PC-3 (cell line): ENCODE measurements at regions of chr17 and their contacts with region 1.

Region 1: GRCh38 chr17:4789901-4790704 is 1.3 kb downstream of the GLTPD2 start:
- DNase-seq: peak; percentile 78
- ATAC-seq: peak; percentile 81
- H3K4me3 ChIP-seq: peak overlapping the region; percentile 89
- H3K27ac ChIP-seq: peak overlapping the region; percentile 77
- H3K4me1 ChIP-seq: peaks cover 16% of the 10 kb centered on the region
- H3K27me3 ChIP-seq: no peaks in the 10 kb centered on the region
- CTCF ChIP-seq: peak; percentile 59

Region 2: GRCh38 chr17:4703330-4703691 is 86.8 kb before region 1 on chr17:
- CTCF ChIA-PET with region 1: no interaction called
- POLR2A ChIA-PET with region 1: interaction called, 15 read pairs
- intact Hi-C with region 1: no loop called
- DNase-seq: no peak
- ATAC-seq: no peak
- H3K4me3 ChIP-seq: peak overlapping the region; percentile 94
- H3K27ac ChIP-seq: peak overlapping the region; percentile 64
- H3K4me1 ChIP-seq: peaks cover 20% of the 10 kb centered on the region
- H3K27me3 ChIP-seq: no peaks in the 10 kb centered on the region
- CTCF ChIP-seq: no peak

Region 3: DNA sequence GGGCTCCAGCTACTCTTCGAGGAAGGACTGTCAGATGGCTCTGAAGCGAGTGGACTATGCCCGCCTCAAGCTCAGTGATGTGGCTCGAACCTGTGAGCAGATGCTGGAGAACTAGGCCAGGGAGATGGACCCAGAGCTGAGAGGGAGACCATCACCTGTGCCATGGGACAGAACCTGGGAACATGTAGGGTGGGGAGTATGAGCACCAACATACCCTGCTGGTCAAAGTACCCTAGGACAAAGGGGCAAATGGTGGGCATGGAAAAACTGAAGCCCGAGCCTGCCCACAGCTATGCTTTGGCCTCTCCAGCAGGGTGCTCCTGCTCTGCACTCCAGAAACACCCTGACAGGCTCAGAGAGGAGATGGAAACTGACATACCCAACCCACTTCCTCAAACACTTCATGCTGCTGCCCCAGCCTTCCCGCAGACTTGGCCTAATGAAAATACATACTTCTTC is 57.0 kb before region 1 on chr17:
- CTCF ChIA-PET with region 1: interaction called, 4 read pairs
- POLR2A ChIA-PET with region 1: no interaction called
- intact Hi-C with region 1: loop called (anchors 2 kb)
- DNase-seq: no peak
- ATAC-seq: no peak
- H3K4me3 ChIP-seq: no peak overlapping the region
- H3K27ac ChIP-seq: no peak overlapping the region
- H3K4me1 ChIP-seq: no peaks in the 10 kb centered on the region
- H3K27me3 ChIP-seq: no peaks in the 10 kb centered on the region
- CTCF ChIP-seq: no peak

Region 4: GRCh38 chr17:4891411-4892342 is 101.6 kb after region 1 on chr17:
- CTCF ChIA-PET with region 1: interaction called, 11 read pairs
- POLR2A ChIA-PET with region 1: no interaction called
- intact Hi-C with region 1: loop called (anchors 1 kb)
- DNase-seq: no peak
- ATAC-seq: no peak
- H3K4me3 ChIP-seq: no peak overlapping the region
- H3K27ac ChIP-seq: no peak overlapping the region
- H3K4me1 ChIP-seq: no peaks in the 10 kb centered on the region
- H3K27me3 ChIP-seq: no peaks in the 10 kb centered on the region
- CTCF ChIP-seq: no peak

Region 5: DNA sequence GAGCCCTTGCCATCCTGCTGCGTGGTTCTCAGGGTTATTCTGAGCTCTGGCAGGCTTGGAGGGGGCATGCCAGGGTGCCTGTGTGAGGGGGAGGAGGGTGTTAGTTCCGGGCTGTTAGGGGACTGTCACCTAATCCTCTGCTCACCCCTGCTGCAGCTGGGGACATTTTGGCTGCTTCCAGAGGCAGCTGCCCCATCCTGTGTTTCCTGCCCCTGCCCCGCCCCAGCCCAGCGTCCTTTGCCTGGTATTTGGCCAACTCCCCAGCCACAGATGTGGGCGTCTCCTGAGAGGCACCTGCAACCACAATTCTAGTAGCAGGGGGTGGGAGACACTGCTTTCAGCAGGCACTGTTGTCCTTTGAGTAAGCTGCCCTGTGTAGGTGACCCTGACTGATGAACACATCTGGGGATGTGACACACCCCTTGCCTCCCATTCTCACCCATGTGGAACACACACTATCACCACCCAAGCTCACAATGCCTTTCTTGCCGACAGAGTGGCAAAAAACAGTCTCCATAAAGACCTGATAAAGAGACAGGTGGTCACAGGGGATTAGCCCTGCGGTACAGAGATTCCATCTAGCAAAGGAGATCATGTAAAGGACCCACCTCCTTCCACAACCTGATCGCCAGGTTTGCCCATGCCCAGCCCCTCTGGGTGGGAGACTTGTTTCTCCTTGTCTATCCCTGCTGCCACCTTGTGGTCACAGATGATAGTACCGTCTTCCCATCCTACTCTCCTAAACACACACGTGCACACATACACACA is 113.1 kb after region 1 on chr17 and contains the start of gene CHRNE:
- CTCF ChIA-PET with region 1: no interaction called
- POLR2A ChIA-PET with region 1: no interaction called
- intact Hi-C with region 1: loop called (anchors 1 kb)
- DNase-seq: peak; percentile 84
- ATAC-seq: peak; percentile 78
- H3K4me3 ChIP-seq: peak within 1 kb of the TSS; percentile 40; the same call in 1 of the 2 replicates
- H3K27ac ChIP-seq: no peak within 1 kb of the TSS
- H3K4me1 ChIP-seq: peaks cover 10% of the 10 kb centered on the region
- H3K27me3 ChIP-seq: no peaks in the 10 kb centered on the region
- CTCF ChIP-seq: peak; percentile 70
- total RNA-seq, gene CHRNE: 0.11 TPM in 1 of 2 replicates, not detected in the other